ENCODE measurements at regions of chr19 and their contacts with region 1.

Region 1: GRCh38 chr19:45643024-45643926 is 4.1 kb upstream of the EML2 start:
- DNase-seq: peak; percentile 90
- H3K4me3 Mint-ChIP-seq: peak overlapping the region; percentile 64
- H3K27ac Mint-ChIP-seq: peak overlapping the region; percentile 100
- H3K4me1 Mint-ChIP-seq: peaks cover 62% of the 10 kb centered on the region
- H3K27me3 Mint-ChIP-seq: no peaks in the 10 kb centered on the region

Region 2: DNA sequence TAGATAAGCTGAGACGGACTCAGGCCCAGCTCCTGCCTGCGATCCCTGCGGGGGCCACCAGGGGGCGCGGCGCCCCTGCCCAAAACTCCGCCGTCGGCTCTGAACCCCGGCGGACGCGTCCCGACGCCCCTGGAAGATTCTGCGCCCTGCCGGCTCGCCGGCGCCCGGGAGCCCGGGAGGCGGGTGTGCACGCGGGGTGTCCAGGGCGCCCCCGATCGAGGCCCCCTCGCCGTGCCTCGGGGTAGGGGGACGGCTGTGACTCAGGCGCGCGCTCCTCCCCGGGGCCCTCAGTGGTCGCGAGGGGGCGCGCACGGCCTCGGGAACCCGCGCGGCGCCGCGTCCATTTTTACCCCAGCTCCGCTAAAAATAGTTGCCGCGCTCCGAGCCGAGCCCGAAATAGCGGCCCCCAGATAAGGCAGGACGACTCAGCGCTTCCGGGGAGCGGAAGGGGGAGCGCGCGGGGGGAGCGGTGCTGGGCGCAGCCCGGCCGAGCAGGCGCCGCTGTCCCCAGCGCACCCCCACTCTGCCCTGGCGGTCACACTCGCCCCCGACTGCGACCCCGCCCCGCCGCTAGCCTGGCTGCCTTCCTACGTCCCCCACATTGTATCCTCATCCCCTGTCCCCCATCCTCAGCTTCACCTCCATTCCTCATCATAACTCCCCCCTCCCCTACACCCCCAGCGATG is 203.6 kb before region 1 on chr19:
- CTCF ChIA-PET with region 1: interaction called, 19 read pairs
- POLR2A ChIA-PET with region 1: interaction called, 8 read pairs
- DNase-seq: peak; percentile 85
- H3K4me3 Mint-ChIP-seq: peak overlapping the region; percentile 59
- H3K27ac Mint-ChIP-seq: peak overlapping the region; percentile 73
- H3K4me1 Mint-ChIP-seq: peaks cover 36% of the 10 kb centered on the region
- H3K27me3 Mint-ChIP-seq: no peaks in the 10 kb centered on the region

Region 3: DNA sequence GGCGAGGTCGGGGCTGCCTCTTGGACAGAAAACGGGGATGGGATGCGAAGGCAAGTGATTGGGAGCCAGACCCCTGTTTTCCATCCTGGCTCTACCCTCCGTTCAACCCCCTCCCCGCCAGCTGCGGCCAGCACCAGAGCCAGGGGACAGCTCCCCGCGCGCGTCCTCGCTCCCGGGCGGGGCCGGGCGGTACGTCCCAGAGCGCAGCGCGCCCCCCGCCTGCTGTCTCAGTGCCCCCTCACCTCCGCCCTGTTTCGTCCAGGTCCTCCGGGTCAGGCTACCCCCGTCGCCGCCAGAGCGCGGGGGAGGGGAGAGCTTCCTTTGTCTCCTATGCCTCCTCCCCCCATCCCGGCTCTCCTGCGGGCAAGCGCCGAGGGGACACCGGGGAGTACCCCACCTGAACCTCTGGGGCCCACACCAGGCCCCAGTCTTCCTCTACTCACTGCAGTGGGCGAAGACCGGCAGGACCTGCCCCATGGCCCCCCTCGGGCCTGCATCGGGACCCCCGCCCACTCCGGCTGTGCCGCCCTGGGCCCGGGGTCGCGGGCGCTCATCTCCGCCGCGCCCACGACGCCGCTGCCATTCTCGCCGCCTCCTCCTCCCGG is 146.8 kb before region 1 on chr19:
- CTCF ChIA-PET with region 1: interaction called, 19 read pairs
- POLR2A ChIA-PET with region 1: interaction called, 16 read pairs
- DNase-seq: peak; percentile 63
- H3K4me3 Mint-ChIP-seq: peak overlapping the region; percentile 59
- H3K27ac Mint-ChIP-seq: no peak overlapping the region
- H3K4me1 Mint-ChIP-seq: peaks cover 53% of the 10 kb centered on the region
- H3K27me3 Mint-ChIP-seq: peaks cover 40% of the 10 kb centered on the region

Region 4: GRCh38 chr19:45584332-45585157 is 58.7 kb before region 1 on chr19 and contains the start of gene OPA3:
- CTCF ChIA-PET with region 1: interaction called, 23 read pairs
- POLR2A ChIA-PET with region 1: interaction called, 16 read pairs
- DNase-seq: peak; percentile 100
- H3K4me3 Mint-ChIP-seq: peak within 1 kb of the TSS; percentile 96
- H3K27ac Mint-ChIP-seq: peak within 1 kb of the TSS; percentile 91
- H3K4me1 Mint-ChIP-seq: peaks cover 22% of the 10 kb centered on the region
- H3K27me3 Mint-ChIP-seq: peaks cover 5% of the 10 kb centered on the region
- total RNA-seq, gene OPA3: 12.0 to 12.9 TPM

Region 5: GRCh38 chr19:45615795-45616708 is 27.2 kb before region 1 on chr19:
- CTCF ChIA-PET with region 1: interaction called, 41 read pairs
- POLR2A ChIA-PET with region 1: interaction called, 85 read pairs
- DNase-seq: peak; percentile 86
- H3K4me3 Mint-ChIP-seq: no peak overlapping the region
- H3K27ac Mint-ChIP-seq: peak overlapping the region; percentile 54
- H3K4me1 Mint-ChIP-seq: peaks cover 28% of the 10 kb centered on the region
- H3K27me3 Mint-ChIP-seq: no peaks in the 10 kb centered on the region

Region 6: DNA sequence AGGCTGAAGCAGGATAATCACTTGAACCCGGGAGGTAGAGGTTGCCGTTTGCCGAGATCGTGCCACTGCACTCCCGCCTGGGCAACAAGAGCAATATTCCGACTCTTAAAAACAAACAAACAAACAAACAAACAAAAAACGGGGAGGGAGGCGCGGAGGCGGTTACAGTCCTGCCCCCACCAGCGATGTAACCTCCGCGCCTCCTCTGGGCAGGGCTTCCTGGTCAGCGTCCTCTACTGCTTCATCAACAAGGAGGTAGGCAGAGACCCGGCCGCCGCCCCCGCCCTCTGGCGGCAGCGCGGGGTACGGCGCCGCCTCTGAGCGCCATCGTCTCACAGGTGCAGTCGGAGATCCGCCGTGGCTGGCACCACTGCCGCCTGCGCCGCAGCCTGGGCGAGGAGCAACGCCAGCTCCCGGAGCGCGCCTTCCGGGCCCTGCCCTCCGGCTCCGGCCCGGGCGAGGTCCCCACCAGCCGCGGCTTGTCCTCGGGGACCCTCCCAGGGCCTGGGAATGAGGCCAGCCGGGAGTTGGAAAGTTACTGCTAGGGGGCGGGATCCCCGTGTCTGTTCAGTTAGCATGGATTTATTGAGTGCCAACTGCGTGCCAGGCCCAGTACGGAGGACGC is 38.2 kb after region 1 on chr19:
- CTCF ChIA-PET with region 1: interaction called, 19 read pairs
- POLR2A ChIA-PET with region 1: interaction called, 12 read pairs
- DNase-seq: peak; percentile 93
- H3K4me3 Mint-ChIP-seq: peak overlapping the region; percentile 78
- H3K27ac Mint-ChIP-seq: peak overlapping the region; percentile 76
- H3K4me1 Mint-ChIP-seq: peaks cover 23% of the 10 kb centered on the region
- H3K27me3 Mint-ChIP-seq: peaks cover 6% of the 10 kb centered on the region

Measured in activated CD4-positive, alpha-beta memory T cell treated with anti-CD3 and anti-CD28 coated beads, Interleukin-2, amount 10 ng/mL, durations not matched to agents 7 days and 5 days (primary cell).